Activated CD4-positive, alpha-beta T cell treated with anti-CD3 and anti-CD28 coated beads, Interleukin-2, amount 10 ng/mL, durations not matched to agents 24 days and 14 days (primary cell): ENCODE measurements at regions of chr11 and their contacts with region 1.

Region 1: GRCh38 chr11:35082321-35083182 is 56.4 kb upstream of the CD44 start:
- DNase-seq: peak; percentile 96
- H3K4me3 Mint-ChIP-seq: peak overlapping the region; percentile 73
- H3K27ac Mint-ChIP-seq: peak overlapping the region; percentile 86
- H3K4me1 Mint-ChIP-seq: peaks cover 78% of the 10 kb centered on the region
- H3K27me3 Mint-ChIP-seq: peaks cover 1% of the 10 kb centered on the region

Region 2: DNA sequence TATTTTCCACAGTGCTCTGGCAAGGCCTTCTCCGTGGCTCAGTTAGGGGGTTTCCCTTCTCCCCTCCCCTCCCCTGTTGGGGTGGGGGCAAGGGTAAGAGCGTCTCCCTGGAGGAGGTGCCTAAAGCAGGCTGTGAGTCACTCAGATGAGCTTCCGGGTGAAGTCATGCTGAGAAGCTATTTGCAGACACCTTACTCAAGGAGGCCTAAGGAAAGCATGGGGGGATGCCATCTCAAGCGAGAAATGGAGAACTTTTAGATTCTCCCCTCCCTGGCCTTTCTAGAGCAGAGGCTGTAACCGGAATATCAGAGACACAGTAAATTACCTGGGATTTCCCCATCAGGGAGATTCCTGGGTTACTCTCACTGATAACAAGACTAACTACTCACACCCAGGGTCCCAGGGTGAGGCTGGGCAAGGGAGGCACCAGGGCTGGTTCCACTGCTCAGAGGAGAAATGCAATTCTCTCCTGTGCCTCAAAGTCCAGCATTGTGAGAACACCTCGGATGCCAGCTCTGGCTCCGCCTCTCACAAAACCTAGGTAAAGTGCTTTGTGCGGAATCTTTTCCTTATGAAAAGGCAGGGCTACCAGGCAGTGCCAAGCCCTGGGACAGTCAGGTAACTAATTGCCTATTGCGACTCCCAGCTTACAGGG is 848.3 kb before region 1 on chr11:
- intact Hi-C with region 1: loop called (anchors 10 kb)
- DNase-seq: peak; percentile 94
- H3K4me3 Mint-ChIP-seq: peak overlapping the region; percentile 30
- H3K27ac Mint-ChIP-seq: peak overlapping the region; percentile 73
- H3K4me1 Mint-ChIP-seq: peaks cover 60% of the 10 kb centered on the region
- H3K27me3 Mint-ChIP-seq: peaks cover 1% of the 10 kb centered on the region

Region 3: GRCh38 chr11:35013514-35014233 is 68.9 kb before region 1 on chr11:
- intact Hi-C with region 1: loop called (anchors 1 kb)
- DNase-seq: peak; percentile 85
- H3K4me3 Mint-ChIP-seq: peak overlapping the region; percentile 50
- H3K27ac Mint-ChIP-seq: peak overlapping the region; percentile 91
- H3K4me1 Mint-ChIP-seq: peaks cover 39% of the 10 kb centered on the region
- H3K27me3 Mint-ChIP-seq: peaks cover 16% of the 10 kb centered on the region

Region 4: GRCh38 chr11:35066783-35067423 is 15.6 kb before region 1 on chr11:
- intact Hi-C with region 1: loop called (anchors 1 kb)
- DNase-seq: peak; percentile 79
- H3K4me3 Mint-ChIP-seq: peak overlapping the region; percentile 40
- H3K27ac Mint-ChIP-seq: peak overlapping the region; percentile 70
- H3K4me1 Mint-ChIP-seq: peaks cover 19% of the 10 kb centered on the region
- H3K27me3 Mint-ChIP-seq: no peaks in the 10 kb centered on the region

Region 5: DNA sequence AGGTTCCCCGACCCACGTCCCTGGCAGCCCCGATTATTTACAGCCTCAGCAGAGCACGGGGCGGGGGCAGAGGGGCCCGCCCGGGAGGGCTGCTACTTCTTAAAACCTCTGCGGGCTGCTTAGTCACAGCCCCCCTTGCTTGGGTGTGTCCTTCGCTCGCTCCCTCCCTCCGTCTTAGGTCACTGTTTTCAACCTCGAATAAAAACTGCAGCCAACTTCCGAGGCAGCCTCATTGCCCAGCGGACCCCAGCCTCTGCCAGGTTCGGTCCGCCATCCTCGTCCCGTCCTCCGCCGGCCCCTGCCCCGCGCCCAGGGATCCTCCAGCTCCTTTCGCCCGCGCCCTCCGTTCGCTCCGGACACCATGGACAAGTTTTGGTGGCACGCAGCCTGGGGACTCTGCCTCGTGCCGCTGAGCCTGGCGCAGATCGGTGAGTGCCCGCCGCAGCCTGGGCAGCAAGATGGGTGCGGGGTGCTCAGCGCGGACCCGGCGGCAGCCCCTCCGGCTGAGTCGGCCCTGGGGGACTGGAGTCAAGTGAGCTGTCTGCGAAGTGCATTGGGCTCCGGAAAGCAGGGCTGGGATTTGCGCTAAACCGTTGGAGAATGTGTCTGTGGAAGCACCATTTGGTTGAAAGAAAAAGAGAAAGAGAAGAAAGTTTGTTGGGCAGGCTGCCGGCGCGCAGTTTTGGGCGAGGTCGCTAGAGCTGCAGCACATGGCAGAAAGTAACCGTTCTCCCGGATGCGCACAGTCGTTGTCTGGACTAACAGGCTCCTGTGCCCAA is 56.6 kb after region 1 on chr11 and contains the start of gene CD44:
- intact Hi-C with region 1: loop called (anchors 1 kb)
- DNase-seq: peak; percentile 91
- H3K4me3 Mint-ChIP-seq: peak within 1 kb of the TSS; percentile 94
- H3K27ac Mint-ChIP-seq: peak within 1 kb of the TSS; percentile 97
- H3K4me1 Mint-ChIP-seq: peaks cover 49% of the 10 kb centered on the region
- H3K27me3 Mint-ChIP-seq: no peaks in the 10 kb centered on the region
- total RNA-seq, gene CD44: 488 and 489 TPM in 2 replicates

Region 6: DNA sequence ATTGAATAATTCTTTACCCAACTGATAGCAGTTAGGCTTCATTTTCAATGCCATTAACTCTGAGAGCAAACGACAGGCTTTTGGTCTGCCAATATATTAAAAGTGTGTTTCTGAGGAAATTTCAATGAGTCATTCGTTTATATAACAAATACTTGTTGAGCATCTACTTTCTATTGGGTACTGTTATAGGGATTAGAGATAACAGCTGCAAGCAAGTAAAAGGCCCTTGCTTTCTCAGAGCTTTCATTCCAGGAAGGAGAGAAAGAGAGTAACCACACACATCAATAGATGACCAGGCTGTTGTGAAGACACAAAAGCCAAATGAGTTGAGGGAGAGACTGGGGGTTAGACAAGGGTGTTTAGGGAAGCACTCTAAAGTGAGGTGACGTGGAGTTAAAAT is 92.1 kb after region 1 on chr11:
- intact Hi-C with region 1: loop called (anchors 1 kb)
- DNase-seq: peak; percentile 69
- H3K4me3 Mint-ChIP-seq: peak overlapping the region; percentile 57
- H3K27ac Mint-ChIP-seq: peak overlapping the region; percentile 85
- H3K4me1 Mint-ChIP-seq: peaks cover 85% of the 10 kb centered on the region
- H3K27me3 Mint-ChIP-seq: no peaks in the 10 kb centered on the region

Region 7: DNA sequence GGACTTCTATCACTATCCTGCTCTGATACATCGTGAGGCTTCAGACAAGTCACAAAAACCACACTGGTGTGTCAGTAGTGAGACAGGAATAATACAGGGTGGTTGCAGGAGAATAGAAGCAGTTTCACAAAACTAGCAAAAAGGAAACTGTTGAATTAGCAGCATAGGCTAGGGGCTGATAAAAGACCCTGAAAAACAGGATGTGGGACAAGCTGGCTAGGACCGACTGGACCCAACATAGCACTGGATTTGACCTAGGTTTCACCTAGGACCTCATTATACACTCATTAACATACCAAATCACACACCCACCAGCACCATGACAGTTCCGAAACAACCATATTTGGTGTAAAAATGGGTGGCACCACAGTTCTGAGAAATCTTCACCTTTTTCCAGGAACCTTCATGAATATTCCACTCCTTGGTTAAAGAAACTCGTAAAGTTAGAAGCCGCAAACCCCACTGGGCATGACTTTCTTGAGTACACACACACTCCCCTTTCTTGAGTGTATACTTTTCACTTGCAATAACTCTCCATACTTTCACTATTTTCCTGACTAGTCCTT is 260.6 kb after region 1 on chr11:
- intact Hi-C with region 1: loop called (anchors 5 kb)
- DNase-seq: peak; percentile 92
- H3K4me3 Mint-ChIP-seq: peak overlapping the region; percentile 68
- H3K27ac Mint-ChIP-seq: peak overlapping the region; percentile 89
- H3K4me1 Mint-ChIP-seq: peaks cover 37% of the 10 kb centered on the region
- H3K27me3 Mint-ChIP-seq: peaks cover 3% of the 10 kb centered on the region